MCF 10A (cell line): ENCODE measurements at regions of chr5 and their contacts with region 1.

Region 1: DNA sequence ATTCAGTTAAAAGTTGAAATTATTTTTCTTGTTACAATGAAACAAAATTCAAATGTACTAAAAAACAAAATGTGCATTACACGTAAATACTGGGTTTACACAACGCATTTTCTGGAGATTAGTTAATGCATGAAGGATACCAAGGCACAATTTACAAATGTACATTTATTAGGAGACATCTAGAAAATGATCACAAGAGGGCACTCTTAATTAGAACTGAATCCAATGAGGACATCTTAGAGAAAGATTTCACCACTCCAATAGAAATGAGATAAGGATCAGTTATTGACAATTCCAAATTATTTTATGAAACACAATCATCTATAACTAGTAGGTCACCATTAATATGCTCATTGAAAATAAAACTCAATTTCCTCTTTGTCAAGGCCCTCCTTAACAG is 36.6 kb upstream of the CDH12 start:
- DNase-seq: peak; percentile 46
- H3K4me3 Mint-ChIP-seq: no peak overlapping the region
- H3K27ac Mint-ChIP-seq: peak overlapping the region; percentile 92
- H3K4me1 Mint-ChIP-seq: peaks cover 39% of the 10 kb centered on the region
- H3K27me3 Mint-ChIP-seq: no peaks in the 10 kb centered on the region
- CTCF ChIP-seq: peak; percentile 31

Region 2: DNA sequence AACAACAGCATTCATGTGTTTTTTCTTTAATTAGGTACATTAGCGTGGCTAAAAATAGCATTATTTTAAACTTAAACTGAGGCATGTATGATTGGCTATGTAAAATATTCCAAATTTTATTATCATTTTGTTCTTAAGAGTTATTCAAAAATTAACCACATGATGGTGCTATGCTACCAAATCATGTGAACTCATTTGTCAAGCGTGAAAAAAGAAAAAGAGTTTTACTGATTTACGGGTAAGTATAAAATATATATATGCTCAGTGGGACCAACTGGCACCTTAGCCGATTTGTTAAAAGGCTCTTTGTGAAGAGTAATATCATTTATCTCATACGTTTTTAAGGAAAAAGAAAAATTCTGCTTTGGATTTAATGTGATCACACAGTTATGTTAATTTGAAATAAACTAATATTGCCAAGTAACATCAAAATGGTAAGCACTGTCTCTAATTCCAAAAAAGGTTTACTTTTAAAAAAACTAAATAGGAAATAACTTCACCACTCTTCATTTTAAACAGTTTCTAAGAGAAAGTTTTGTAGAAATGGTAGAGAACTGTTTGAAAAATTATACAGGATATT is 1078.9 kb before region 1 on chr5:
- CTCF ChIA-PET with region 1: no interaction called
- POLR2A ChIA-PET with region 1: no interaction called
- intact Hi-C with region 1: loop called (anchors 10 kb)
- DNase-seq: peak; percentile 40
- H3K4me3 Mint-ChIP-seq: no peak overlapping the region
- H3K27ac Mint-ChIP-seq: no peak overlapping the region
- H3K4me1 Mint-ChIP-seq: peaks cover 37% of the 10 kb centered on the region
- H3K27me3 Mint-ChIP-seq: no peaks in the 10 kb centered on the region
- CTCF ChIP-seq: peak; percentile 47

Region 3: GRCh38 chr5:22908129-22908528 is 18.4 kb after region 1 on chr5:
- CTCF ChIA-PET with region 1: interaction called, 5 read pairs
- POLR2A ChIA-PET with region 1: interaction called, 26 read pairs
- intact Hi-C with region 1: no loop called
- DNase-seq: peak; percentile 88
- H3K4me3 Mint-ChIP-seq: peak overlapping the region; percentile 7
- H3K27ac Mint-ChIP-seq: peak overlapping the region; percentile 85
- H3K4me1 Mint-ChIP-seq: peaks cover 12% of the 10 kb centered on the region
- H3K27me3 Mint-ChIP-seq: no peaks in the 10 kb centered on the region
- CTCF ChIP-seq: no peak

Region 4: DNA sequence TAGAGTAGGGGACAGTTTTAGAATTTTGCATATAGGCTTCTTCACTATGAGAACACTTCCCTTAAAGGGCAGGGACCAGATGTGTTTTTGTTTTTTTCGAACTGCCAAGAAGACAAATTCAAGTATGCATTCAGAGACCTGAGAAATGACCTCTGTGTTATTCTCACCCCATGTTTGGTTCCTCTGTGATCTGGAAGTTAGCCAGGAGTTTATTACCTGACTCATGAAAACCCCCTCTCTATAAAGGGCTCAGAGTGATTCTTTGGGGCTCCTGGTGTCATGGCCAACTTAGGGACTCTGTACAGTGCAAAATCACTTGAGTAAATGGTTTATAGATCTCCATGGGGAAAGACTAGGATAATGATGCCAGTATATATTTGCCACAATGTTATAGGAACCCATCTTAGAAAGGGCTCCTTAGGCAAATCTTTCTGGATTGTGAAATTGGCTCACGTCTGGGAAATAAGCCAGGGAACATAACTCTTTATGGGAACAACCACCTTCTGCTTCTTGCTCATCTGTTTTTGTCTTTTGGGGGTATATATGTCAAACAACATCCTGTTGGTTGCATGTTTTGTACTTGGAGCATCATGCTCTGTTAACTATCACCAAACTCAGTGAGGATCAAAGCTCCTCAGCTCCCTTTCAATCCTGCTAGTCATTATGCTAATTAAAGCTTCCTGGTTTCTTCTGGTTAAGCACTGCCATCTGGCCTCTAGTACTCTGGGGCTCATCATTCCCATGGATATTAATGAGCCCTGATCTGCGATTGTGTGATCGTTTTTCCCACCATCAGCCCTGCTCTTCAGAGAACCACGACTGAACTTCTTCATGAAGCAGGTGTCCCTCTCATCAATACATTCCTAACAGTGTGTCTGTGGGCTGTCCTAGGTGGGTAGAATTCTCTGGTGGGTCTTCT is 136.8 kb after region 1 on chr5:
- CTCF ChIA-PET with region 1: interaction called, 8 read pairs
- POLR2A ChIA-PET with region 1: interaction called, 13 read pairs
- intact Hi-C with region 1: no loop called
- DNase-seq: peak; percentile 93
- H3K4me3 Mint-ChIP-seq: no peak overlapping the region
- H3K27ac Mint-ChIP-seq: peak overlapping the region; percentile 78
- H3K4me1 Mint-ChIP-seq: peaks cover 19% of the 10 kb centered on the region
- H3K27me3 Mint-ChIP-seq: no peaks in the 10 kb centered on the region
- CTCF ChIP-seq: no peak

Region 5: GRCh38 chr5:23208959-23209431 is 319.3 kb after region 1 on chr5:
- CTCF ChIA-PET with region 1: no interaction called
- POLR2A ChIA-PET with region 1: no interaction called
- intact Hi-C with region 1: loop called (anchors 2 kb)
- DNase-seq: peak; percentile 76
- H3K4me3 Mint-ChIP-seq: no peak overlapping the region
- H3K27ac Mint-ChIP-seq: no peak overlapping the region
- H3K4me1 Mint-ChIP-seq: peaks cover 5% of the 10 kb centered on the region
- H3K27me3 Mint-ChIP-seq: no peaks in the 10 kb centered on the region
- CTCF ChIP-seq: peak; percentile 69